KBM-7 (cell line): ENCODE measurements at regions of chr3 and their contacts with region 1.

Region 1: GRCh38 chr3:160941885-160942494 is 163.2 kb downstream of the B3GALNT1 start:
- DNase-seq: peak; percentile 82

Region 2: DNA sequence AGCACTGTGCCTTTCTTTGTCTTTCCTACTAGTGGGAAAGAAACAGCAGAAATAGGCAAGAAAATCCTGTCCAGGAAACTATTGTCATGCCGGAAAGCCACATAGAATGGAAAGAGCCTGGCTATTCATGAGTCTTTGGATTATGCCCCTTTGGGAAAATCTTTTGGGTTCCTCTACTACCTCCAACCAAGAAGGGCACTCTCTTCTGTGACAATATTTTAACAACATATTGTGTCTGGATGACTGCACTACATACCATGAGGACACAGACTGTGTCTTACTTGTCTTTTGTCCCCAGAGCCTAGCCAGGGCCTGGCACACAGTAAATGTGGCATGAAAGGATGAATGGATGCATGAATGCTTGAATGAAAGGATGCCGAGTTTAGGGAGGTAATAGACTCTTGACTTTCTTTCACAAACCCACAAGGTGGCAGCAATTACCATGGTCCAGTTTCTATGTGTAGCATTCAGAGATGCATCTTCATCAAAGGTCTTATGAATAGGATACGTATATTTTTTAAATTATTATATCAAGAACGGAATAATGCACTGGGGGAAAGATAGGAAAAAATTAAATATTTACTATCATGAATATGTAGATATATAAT is 234.7 kb before region 1 on chr3:
- in situ Hi-C with region 1: loop called (anchors 25 kb)
- DNase-seq: peak; percentile 38

Region 3: DNA sequence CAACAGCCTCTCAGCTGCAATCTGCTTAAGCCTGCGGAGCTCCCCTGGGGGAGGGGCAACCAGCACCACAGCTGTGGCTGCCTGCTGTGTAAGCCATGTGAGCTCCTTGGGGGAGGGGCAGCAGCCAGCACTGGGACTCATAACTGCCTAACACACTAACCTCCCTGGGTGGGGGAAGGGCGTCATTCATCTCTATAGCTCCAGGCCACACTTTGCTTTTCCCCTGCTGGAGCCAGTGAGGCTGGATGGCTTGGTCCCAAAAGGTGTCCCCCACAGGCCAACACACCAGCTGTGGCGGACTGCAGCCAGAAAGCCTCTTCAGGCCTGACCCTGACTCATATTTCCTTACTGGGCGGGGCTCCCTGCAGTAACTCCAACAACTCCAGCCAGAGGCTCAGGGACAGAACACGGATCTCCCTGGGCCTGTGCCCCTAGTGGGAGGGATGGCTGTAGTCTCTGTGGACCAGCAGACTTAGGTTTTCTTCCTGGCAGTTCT is 56.2 kb before region 1 on chr3:
- in situ Hi-C with region 1: no loop called
- DNase-seq: peak; percentile 19

Region 4: DNA sequence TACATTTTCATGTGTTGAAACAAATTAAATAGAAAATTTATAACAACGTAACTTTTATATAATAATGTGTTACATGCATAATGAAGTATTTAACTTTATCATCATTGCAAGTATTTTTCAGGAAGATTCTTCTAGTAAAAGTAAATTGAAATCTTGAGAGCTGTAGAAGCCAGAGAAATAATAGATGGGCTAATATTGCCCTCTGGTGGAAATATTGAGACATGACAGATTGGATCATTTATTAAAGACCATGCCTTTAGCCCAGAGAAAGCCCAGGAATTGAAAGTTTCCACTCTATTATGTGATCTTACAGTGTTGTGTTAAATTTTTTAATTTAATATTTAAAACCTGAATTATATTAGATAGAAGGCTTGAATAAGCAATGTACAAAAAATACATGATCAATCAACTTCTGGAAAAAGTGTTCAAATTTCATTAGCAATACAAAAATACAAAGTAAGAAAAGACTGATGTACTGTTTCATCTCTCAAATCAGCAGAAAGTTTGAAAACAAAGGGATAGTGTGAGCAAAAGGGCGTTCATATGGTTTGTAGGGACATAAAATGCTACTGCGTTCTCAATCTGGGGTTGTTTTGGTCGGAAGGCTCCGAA is 482.0 kb after region 1 on chr3:
- in situ Hi-C with region 1: loop called (anchors 25 kb)
- DNase-seq: peak; percentile 61